ENCODE measurements at regions of chr17 and their contacts with region 1.

Region 1: GRCh38 chr17:28763804-28764266 is 20.0 kb downstream of the TRAF4 start:
- DNase-seq: peak; percentile 63 to 84 (median 70)
- H3K4me3 ChIP-seq: no peak overlapping the region
- H3K4me3 Mint-ChIP-seq: no peak overlapping the region
- H3K27ac ChIP-seq: no peak overlapping the region
- H3K27ac Mint-ChIP-seq: peak overlapping the region; percentile 31 to 90 (median 76)
- H3K4me1 ChIP-seq: no peaks in the 10 kb centered on the region
- H3K4me1 Mint-ChIP-seq: peaks cover 2 to 6% (median 4%) of the 10 kb centered on the region in 3 donors
- H3K27me3 ChIP-seq: no peaks in the 10 kb centered on the region
- H3K27me3 Mint-ChIP-seq: no peaks in the 10 kb centered on the region

Region 2: DNA sequence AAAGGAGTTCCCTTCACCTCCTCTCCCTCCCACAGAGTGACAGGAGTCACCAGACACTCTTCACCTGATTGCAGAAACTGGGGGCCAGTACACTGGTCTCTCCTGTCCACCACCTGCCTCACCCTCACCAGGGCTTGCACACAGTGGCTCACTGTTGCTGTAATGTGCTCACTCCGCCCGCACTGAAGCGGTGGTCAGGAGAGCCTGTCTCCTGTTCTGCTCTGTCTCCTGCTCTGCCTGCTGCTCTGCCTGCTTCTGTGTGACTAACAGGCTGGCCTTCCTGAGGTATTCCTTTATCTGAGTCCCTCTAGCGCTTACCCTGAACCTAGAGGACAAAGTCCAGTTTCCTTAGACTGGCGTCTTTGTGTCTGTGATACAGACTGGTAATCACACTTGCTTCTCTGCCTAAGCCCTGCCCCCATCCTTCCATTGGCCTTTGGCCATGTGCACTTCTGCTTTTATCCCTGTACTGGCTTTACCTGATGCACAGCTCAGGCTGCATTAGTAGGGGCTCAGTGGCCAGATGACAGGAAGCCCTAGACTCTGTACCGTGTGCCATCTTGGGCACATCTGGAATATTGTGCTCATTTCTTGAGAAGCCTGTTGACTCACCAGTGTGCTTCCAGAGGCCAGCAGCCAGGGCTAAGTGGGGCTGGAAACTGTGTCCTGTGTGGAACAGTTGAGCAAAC is 65.4 kb before region 1 on chr17:
- CTCF ChIA-PET with region 1: no interaction called
- POLR2A ChIA-PET with region 1: no interaction called
- DNase-seq: no peak
- H3K4me3 ChIP-seq: no peak overlapping the region
- H3K4me3 Mint-ChIP-seq: no peak overlapping the region
- H3K27ac ChIP-seq: no peak overlapping the region
- H3K27ac Mint-ChIP-seq: peak overlapping the region in 1 of 8 donors; percentile 47
- H3K4me1 ChIP-seq: no peaks in the 10 kb centered on the region
- H3K4me1 Mint-ChIP-seq: no peaks in the 10 kb centered on the region
- H3K27me3 ChIP-seq: no peaks in the 10 kb centered on the region
- H3K27me3 Mint-ChIP-seq: no peaks in the 10 kb centered on the region

Region 3: GRCh38 chr17:28750178-28751047 is 13.4 kb before region 1 on chr17:
- CTCF ChIA-PET with region 1: interaction called, 49 read pairs
- POLR2A ChIA-PET with region 1: no interaction called
- DNase-seq: peak; percentile 81 to 91 (median 84)
- H3K4me3 ChIP-seq: no peak overlapping the region
- H3K4me3 Mint-ChIP-seq: peak overlapping the region in 1 of 7 donors; percentile 60
- H3K27ac ChIP-seq: no peak overlapping the region
- H3K27ac Mint-ChIP-seq: peak overlapping the region in 4 of 8 donors; percentile 33 to 86 (median 58)
- H3K4me1 ChIP-seq: peaks cover 19% of the 10 kb centered on the region
- H3K4me1 Mint-ChIP-seq: peaks cover 3 to 21% (median 11%) of the 10 kb centered on the region in 3 donors
- H3K27me3 ChIP-seq: no peaks in the 10 kb centered on the region
- H3K27me3 Mint-ChIP-seq: no peaks in the 10 kb centered on the region

Region 4: GRCh38 chr17:28812091-28812747 is 48.4 kb after region 1 on chr17:
- CTCF ChIA-PET with region 1: interaction called, 10 read pairs
- POLR2A ChIA-PET with region 1: no interaction called
- DNase-seq: peak; percentile 94 to 97 (median 95)
- H3K4me3 ChIP-seq: peak overlapping the region; percentile 99
- H3K4me3 Mint-ChIP-seq: peak overlapping the region; percentile 87 to 98 (median 93)
- H3K27ac ChIP-seq: peak overlapping the region; percentile 90
- H3K27ac Mint-ChIP-seq: peak overlapping the region; percentile 94 to 100 (median 98)
- H3K4me1 ChIP-seq: peaks cover 18% of the 10 kb centered on the region
- H3K4me1 Mint-ChIP-seq: peaks cover 19 to 49% (median 37%) of the 10 kb centered on the region in 3 donors
- H3K27me3 ChIP-seq: no peaks in the 10 kb centered on the region
- H3K27me3 Mint-ChIP-seq: no peaks in the 10 kb centered on the region

Region 5: GRCh38 chr17:28902819-28903545 is 139.1 kb after region 1 on chr17 and contains the start of gene DHRS13:
- CTCF ChIA-PET with region 1: interaction called, 33 read pairs
- POLR2A ChIA-PET with region 1: interaction called, 3 read pairs
- DNase-seq: peak; percentile 93 to 97 (median 95)
- H3K4me3 ChIP-seq: peak within 1 kb of the TSS; percentile 71
- H3K4me3 Mint-ChIP-seq: peak within 1 kb of the TSS; percentile 87 to 95 (median 92)
- H3K27ac ChIP-seq: peak within 1 kb of the TSS; percentile 82
- H3K27ac Mint-ChIP-seq: peak within 1 kb of the TSS; percentile 78 to 98 (median 96)
- H3K4me1 ChIP-seq: peaks cover 42% of the 10 kb centered on the region
- H3K4me1 Mint-ChIP-seq: peaks cover 33 to 48% (median 37%) of the 10 kb centered on the region in 3 donors
- H3K27me3 ChIP-seq: no peaks in the 10 kb centered on the region
- H3K27me3 Mint-ChIP-seq: no peaks in the 10 kb centered on the region
- total RNA-seq, gene DHRS13: 32.6 to 34.7 TPM

Region 6: DNA sequence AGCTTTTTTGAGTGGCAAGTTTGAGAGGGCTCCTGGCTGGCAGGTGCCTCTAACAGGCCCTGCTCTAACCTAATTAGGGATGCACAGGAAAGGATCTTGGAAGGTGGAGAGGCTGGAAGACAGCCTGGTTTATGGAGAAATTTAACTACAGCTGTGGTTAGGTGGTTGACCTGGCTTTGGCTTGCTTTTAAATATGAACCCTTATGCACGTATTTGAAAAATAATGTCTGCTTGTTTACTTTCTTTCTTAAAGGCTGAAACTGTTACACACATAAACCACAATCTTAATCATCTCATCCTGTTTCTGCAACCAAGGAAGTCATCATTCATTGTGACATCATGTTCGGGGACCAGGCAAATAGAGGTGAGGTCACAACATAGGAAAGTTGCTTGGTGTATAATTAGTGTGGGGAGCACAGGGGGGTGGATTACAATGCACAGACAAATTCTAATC is 162.1 kb after region 1 on chr17:
- CTCF ChIA-PET with region 1: interaction called, 12 read pairs
- POLR2A ChIA-PET with region 1: interaction called, 12 read pairs
- DNase-seq: peak; percentile 32 to 89 (median 79)
- H3K4me3 ChIP-seq: peak overlapping the region; percentile 21
- H3K4me3 Mint-ChIP-seq: peak overlapping the region; percentile 3 to 81 (median 63)
- H3K27ac ChIP-seq: peak overlapping the region; percentile 77
- H3K27ac Mint-ChIP-seq: peak overlapping the region; percentile 91 to 99 (median 95)
- H3K4me1 ChIP-seq: peaks cover 57% of the 10 kb centered on the region
- H3K4me1 Mint-ChIP-seq: peaks cover 64 to 86% (median 70%) of the 10 kb centered on the region in 3 donors
- H3K27me3 ChIP-seq: no peaks in the 10 kb centered on the region
- H3K27me3 Mint-ChIP-seq: no peaks in the 10 kb centered on the region

Measured in CD8-positive, alpha-beta memory T cell (primary cell).